ENCODE measurements at regions of chr5 and their contacts with region 1.

Region 1: GRCh38 chr5:173204185-173204979 is 30.6 kb downstream of the NKX2-5 start:
- DNase-seq: no peak
- H3K4me3 ChIP-seq: no peak overlapping the region
- H3K27ac ChIP-seq: no peak overlapping the region
- H3K4me1 ChIP-seq: no peaks in the 10 kb centered on the region
- H3K27me3 ChIP-seq: peaks cover 0 to 46% (median 9%) of the 10 kb centered on the region in 7 donors
- CTCF ChIP-seq: peak in 10 of 11 experiments; percentile 17 to 66 (median 52)
- POLR2A ChIP-seq: no peak

Region 2: DNA sequence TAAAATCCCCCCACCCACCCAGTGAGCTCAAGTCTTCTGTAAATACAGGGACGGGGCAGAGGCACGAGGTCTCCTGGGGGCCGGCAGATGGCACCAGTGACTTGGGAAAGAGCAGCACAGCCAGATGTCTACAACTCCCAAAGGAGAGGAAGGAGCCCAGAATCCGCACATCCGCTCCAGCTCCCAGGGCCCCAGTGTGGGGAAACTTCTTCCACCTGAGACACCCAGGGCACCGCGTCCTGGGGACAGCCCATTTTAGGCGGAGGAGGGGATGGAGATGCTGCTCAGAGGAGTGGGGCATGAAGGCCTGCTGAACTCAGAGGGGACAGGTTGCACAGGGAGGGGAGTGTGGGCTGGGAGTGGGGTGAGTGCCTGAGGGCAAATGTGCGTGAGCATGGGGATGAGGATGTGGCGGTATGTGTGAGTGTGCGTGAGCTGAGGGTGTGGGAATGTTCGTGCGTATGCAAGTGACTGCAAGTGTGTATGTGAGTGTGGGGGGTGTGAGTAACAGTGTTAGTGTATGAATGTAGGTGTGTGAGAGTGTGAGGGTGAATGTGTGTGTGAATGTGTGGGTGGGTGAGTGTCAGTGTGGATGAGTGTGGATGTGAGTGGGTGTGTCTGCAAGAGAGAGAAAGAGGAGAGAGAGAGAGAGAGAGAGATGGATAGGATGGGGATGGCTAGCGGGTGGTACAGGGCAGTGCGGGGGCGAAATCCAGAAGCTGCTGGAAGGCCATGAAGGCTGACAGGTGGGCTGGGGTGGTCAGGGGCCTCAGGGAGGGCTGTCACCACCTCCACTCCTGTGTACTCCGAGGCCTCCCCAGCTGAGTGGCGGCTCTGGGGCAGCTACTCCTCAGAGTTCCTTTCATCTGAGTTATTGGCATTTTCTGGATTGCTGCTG is 496.8 kb before region 1 on chr5:
- intact Hi-C with region 1: loop called (anchors 10 kb)
- DNase-seq: peak; percentile 77
- H3K4me3 ChIP-seq: no peak overlapping the region
- H3K27ac ChIP-seq: no peak overlapping the region
- H3K4me1 ChIP-seq: peaks cover 0 to 10% (median under 1%) of the 10 kb centered on the region in 6 donors
- H3K27me3 ChIP-seq: peaks cover 0 to 57% (median 0%) of the 10 kb centered on the region in 7 donors
- CTCF ChIP-seq: peak in 8 of 11 experiments; percentile 10 to 49 (median 39)
- POLR2A ChIP-seq: no peak

Region 3: GRCh38 chr5:173099461-173099860 is 104.9 kb before region 1 on chr5:
- intact Hi-C with region 1: no loop called
- DNase-seq: no peak
- H3K4me3 ChIP-seq: no peak overlapping the region
- H3K27ac ChIP-seq: peak overlapping the region in 1 of 8 donors; percentile 4
- H3K4me1 ChIP-seq: peaks cover 0 to 61% (median 28%) of the 10 kb centered on the region in 6 donors
- H3K27me3 ChIP-seq: no peaks in the 10 kb centered on the region
- CTCF ChIP-seq: no peak
- POLR2A ChIP-seq: no peak